ENCODE measurements at regions of chr11 and their contacts with region 1.

Region 1: DNA sequence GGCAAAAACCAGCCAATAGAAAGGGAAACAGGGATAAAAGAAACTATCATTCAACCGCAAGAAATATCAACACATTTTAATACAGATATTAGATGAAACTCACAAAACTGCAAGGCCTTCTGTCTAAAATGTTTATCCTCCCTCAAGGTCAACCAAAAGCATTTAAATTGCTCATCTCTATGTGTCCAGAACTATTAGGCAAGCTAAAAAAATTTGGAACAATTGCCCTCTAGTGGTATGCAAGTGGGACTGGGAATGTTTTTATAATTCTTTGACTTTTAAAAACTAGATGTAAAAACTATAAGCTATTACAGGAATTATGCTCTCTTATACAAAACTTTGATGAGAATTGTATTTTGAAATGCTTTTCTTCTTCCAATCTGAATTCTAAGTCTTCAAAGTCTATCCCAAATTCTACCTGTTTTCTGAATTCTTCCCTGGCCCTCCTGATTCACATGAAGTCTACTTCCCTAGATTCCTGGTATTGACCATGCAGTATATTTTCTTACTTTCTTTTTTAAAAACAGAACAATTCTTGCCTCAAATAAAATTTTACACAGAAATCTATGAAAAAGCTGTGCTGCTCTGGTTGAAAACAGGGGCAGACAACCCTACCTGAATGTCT is 4.9 kb downstream of the CWC15 start:
- DNase-seq: no peak
- H3K4me3 ChIP-seq: no peak overlapping the region
- CTCF ChIP-seq: peak; percentile 42

Region 2: DNA sequence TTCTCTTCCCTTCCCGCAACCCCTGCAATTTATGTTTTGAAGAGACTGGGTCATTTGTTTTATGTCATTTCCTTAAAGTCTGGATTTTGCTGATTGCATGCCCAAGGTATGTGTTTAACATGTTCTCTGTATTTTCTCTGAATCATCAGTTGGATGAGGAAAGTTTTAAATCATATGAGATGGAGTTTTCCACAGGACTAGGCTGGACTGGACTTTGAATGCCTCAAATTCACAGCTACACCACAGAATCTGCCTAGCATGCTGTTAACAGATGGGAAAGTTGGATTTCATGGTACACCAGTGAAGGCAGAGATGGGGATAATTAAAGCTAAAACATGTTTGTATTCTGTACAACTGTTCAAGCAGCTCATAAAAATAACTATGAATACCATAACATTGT is 57.7 kb before region 1 on chr11:
- CTCF ChIA-PET with region 1: interaction called, 18 read pairs
- POLR2A ChIA-PET with region 1: interaction called, 4 read pairs
- DNase-seq: peak; percentile 84
- H3K4me3 ChIP-seq: no peak overlapping the region
- CTCF ChIP-seq: no peak

Region 3: DNA sequence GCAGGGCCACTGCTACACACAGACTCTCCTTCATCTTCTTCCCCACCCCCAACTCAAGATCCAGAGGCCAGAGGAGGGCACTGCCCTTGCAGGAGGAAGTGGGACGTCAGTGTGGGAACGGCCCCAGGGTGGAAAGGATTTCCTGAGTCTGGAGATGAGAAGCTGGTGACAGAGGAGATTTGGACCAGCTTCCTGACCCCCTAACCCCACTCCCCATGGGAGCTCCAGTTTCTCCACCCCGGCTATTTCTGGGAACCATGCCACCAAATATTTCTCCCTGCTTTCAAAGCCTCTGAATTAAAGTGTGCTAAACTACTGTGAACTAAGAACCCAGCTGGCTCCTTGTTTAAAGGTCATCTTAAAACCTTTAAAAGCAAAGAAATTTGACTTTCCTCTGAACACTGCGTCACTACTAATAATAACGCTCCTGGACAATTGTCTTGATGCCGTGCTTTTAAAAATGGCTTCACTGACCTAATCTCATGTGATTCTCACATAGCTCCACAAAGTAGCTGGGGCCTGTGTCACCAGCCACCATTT is 41.7 kb before region 1 on chr11:
- CTCF ChIA-PET with region 1: interaction called, 12 read pairs
- POLR2A ChIA-PET with region 1: interaction called, 3 read pairs
- DNase-seq: peak; percentile 79
- H3K4me3 ChIP-seq: no peak overlapping the region
- CTCF ChIP-seq: no peak

Region 4: DNA sequence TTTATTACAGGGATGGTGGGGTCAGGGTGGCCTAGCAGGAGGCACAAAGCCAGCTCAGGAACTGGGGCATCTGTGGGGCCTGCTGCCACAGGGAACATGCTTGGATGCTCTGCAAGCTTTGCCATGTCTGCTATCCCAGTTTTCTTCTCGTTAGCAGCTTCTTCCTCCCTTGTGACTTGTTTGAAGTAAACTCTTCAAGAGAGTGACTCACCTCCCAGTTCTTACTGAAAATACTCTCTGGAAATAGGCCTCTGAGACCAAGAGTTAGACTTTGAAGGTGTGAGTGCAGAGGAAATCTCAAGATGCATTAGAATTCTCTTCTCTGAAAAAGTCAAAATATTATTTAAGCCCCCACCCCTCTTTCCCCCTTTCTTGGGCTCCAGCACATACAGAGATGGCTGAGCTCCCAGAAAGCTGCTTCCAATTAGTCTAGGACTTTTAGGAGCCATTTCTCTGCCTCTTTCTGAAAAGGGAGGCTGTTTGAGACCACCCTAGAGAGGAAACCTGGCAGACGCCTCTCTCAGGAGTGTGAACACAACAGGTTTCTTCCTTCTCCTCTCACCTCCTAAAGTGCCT is 10.2 kb before region 1 on chr11:
- CTCF ChIA-PET with region 1: interaction called, 26 read pairs
- POLR2A ChIA-PET with region 1: interaction called, 3 read pairs
- DNase-seq: no peak
- H3K4me3 ChIP-seq: no peak overlapping the region
- CTCF ChIP-seq: no peak